ENCODE measurements at regions of chr15 and their contacts with region 1.

Region 1: GRCh38 chr15:38683382-38684242 is 119.0 kb upstream of the RASGRP1 start:
- DNase-seq: peak; percentile 52
- CTCF ChIP-seq: peak; percentile 82

Region 2: GRCh38 chr15:38453971-38454695 is 229.5 kb before region 1 on chr15 and contains the start of gene FAM98B:
- CTCF ChIA-PET with region 1: interaction called, 13 read pairs
- POLR2A ChIA-PET with region 1: no interaction called
- DNase-seq: peak; percentile 84
- CTCF ChIP-seq: no peak

Region 3: DNA sequence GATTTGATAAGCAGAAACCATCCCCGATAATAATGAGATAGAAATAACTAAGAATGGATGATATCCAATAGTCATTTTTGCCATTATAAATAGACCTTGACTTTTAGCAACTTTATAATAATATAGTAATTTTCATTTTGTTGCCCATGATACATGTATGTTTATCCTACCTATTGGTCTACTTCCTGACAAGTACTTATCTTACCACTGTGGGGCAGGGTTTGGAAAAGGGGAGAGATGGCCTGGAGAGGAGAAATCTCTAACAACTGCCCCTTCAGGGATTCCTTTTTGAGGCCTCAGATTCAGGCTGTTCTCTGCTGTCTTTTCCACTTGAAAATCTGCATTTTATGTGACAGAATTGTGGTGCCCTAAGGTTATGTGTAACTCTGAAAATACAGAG is 187.5 kb before region 1 on chr15:
- CTCF ChIA-PET with region 1: interaction called, 17 read pairs
- POLR2A ChIA-PET with region 1: no interaction called
- DNase-seq: no peak
- CTCF ChIP-seq: no peak

Region 4: DNA sequence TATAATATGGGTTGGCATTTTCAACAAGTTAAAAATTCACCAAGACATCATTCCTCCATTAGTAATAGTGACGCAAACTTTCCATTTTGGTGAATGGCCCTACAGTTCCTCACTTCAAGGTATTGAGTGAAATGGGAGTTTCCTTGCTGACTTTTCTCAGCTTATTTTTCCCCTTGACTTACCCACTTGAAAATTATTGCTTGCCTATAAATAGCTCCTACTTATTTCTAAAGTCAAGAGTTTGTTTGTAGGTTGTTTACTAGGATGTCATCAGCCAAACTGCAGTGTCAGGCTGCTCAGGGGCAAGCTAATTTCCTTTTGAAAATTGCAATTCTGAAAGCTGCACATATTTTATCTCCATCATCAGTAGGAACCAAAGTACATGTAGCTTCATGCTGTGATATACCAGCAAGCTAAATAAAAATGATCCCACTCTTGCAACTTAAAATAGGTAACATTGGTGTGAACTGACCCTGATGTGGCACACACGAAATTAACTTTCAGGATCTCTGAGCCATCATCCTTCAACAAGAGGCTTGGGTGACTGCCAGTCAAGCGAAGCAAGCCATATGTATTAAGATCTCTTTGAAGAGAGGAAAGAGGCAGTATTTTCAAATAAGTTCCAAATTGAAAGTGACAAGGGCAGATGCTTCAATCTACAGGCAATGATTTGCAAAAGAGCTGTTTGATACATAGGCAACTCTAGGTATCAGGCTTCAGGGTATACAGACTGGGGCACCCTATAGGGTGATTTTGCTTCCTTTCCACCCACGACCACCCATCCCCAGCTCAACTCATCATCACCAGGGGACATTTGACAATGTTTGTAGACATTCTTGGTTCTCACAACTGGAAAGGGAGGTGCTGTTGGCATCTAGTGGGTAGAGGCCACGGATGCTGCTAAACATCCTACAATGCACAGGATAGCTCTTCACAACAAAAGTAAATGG is 52.2 kb before region 1 on chr15:
- CTCF ChIA-PET with region 1: interaction called, 18 read pairs
- POLR2A ChIA-PET with region 1: no interaction called
- DNase-seq: no peak
- CTCF ChIP-seq: no peak

Region 5: GRCh38 chr15:38660738-38661137 is 22.9 kb before region 1 on chr15:
- CTCF ChIA-PET with region 1: interaction called, 32 read pairs
- POLR2A ChIA-PET with region 1: no interaction called
- DNase-seq: no peak
- CTCF ChIP-seq: no peak

Region 6: DNA sequence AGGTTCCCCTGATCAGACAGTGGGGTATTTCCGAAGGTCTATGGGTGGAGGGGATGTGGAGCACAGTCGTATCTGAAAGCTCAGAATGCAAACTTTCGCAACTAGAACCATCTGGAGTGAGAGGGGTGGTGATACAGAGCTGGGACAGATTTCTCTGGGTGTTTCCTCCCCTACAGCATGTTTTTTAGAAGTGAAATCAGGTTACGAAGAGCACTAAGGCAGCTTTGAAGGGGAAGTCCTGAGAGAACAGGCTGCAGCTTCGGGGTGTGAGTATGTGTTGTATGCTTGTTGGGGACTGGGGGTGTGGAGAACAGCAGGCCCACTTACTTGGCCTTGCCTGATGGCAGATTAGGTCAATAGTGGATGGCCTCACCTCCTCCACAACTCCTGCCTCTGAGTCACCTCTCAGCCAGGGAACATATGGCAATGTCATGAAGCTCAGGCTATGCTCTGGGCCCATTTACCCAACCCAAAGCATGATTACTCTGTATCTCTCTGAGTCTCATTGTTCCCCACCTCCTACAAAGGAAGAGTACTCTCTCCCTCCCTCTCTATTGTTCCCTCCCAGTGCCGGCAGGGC is 11.8 kb before region 1 on chr15:
- CTCF ChIA-PET with region 1: interaction called, 122 read pairs
- POLR2A ChIA-PET with region 1: no interaction called
- DNase-seq: no peak
- CTCF ChIP-seq: peak; percentile 0

Region 7: DNA sequence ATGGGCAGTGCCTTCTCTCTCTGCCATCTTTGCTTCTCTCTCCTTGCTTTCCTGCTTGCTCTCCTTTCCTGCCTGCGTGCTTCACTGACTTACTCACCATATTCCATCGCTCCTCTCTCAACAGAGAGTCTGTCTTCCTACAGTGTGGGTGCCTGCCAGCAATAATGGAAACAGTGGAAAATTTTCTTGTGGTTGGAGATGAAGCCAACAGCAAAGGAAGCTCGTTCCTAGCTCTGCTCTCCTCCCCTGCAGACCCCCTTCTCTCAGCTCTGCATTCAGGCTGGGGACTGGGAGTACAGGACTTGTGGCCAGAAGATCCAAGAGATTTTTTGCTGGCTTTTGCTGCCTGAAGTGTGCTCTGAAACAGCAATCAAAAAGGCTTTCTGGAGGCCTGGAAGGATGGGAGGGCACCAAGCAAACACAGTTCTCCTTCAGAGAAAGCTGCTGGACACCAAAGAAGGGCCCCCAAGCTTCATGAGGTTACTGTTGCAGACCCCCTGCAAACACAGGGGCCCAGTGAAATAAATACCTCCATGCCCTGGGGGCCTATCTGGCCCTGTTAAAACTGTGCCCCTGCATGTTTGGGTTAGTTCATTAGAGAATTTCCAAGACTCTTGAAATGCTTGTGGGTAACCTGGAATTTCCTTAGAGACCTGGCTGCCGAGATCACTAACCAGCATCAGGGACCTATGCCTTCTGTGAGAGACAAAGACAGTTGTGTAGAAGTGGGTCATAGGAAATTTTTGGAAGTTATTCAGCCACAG is 30.9 kb after region 1 on chr15:
- CTCF ChIA-PET with region 1: no interaction called
- POLR2A ChIA-PET with region 1: no interaction called
- DNase-seq: no peak
- CTCF ChIP-seq: no peak

Region 8: DNA sequence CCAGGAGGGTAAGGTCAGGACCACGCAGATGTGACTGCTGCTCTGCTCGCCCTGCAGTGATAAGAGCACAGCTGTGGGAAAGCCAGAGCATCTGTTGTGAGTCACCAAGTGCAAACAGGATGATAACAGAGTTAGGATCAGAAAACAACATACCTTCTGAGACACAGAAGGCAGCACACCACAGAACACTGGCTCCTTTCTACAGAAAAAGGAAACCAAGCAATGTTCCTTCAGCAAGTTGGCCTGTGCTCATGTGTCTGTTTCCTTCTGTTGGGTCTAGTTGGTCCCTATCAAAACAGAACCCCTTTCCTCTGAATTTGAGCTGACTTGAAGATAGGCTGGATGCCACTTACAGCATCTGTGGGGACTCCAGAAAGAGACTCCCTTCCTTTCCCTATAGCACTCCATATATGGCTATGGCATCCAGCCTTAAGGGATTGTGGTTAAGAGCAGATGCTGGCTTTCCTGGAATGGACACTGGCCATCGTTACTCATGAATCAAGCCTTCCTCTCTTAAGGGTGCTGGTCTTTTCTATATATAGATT is 456.5 kb after region 1 on chr15:
- CTCF ChIA-PET with region 1: no interaction called
- POLR2A ChIA-PET with region 1: no interaction called
- DNase-seq: no peak
- CTCF ChIP-seq: no peak

Measured in GM10248 (cell line).